GM12878 (cell line): ENCODE measurements at regions of chr10 and their contacts with region 1.

Region 1: DNA sequence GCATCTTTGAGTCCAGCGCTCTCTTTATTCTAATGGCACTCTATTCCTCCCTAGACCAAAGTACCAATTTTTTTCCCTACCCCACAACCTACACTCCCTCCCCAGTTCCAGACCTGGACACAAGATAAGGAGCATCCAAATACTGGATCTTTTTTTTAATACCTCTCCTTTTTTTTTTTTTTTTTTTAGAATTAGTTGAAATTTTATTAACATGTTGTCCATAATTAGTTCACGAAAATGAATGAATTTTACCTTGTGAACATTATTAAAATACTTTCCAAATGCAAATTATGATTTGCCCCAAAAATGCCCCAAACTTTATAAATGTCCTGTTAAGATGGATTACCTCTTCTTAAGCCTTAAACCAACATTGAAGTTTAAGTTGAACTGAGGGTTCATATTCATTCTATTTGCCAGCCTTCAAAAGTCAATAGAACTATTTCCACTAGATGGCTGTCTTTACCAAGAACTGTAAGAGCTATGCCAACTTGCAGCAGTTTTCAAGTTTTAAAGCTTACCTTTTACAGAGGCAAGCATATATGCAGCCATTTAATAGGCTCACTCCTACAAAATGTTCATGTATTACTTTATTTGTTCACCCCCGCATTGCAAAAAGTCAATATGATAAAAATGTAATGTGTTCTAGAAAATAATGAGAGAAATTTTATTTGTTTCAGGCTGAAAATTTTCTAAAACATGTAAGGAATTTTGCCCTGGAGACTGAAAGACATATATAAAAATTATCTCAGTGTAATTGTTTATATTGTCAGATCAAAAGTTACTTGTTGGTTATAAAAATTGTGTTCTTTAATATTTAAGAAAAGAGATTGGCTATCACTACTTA is 39.7 kb upstream of the TNKS2 start:
- DNase-seq: peak; percentile 11
- ATAC-seq: peak; percentile 74
- H3K4me3 ChIP-seq: no peak overlapping the region
- H3K27ac ChIP-seq: no peak overlapping the region
- H3K4me1 ChIP-seq: no peaks in the 10 kb centered on the region
- H3K27me3 ChIP-seq: no peaks in the 10 kb centered on the region
- CTCF ChIP-seq: peak; percentile 36 to 63 (median 42); a peak in 5 of 6 replicates
- EP300 ChIP-seq: no peak
- POLR2A ChIP-seq: no peak
- RAD21 ChIP-seq: peak; percentile 90

Region 2: GRCh38 chr10:91771907-91772306 is 13.4 kb after region 1 on chr10:
- CTCF ChIA-PET with region 1: interaction called, 11 read pairs
- POLR2A ChIA-PET with region 1: no interaction called
- RAD21 ChIA-PET with region 1: interaction called, 7 read pairs
- SMC1A ChIA-PET with region 1: interaction called, 5 read pairs
- in situ Hi-C with region 1: no loop called
- intact Hi-C with region 1: no loop called
- DNase-seq: no peak
- ATAC-seq: no peak
- H3K4me3 ChIP-seq: no peak overlapping the region
- H3K27ac ChIP-seq: no peak overlapping the region
- H3K4me1 ChIP-seq: no peaks in the 10 kb centered on the region
- H3K27me3 ChIP-seq: no peaks in the 10 kb centered on the region; a peak in 1 of 4 replicates
- CTCF ChIP-seq: no peak
- EP300 ChIP-seq: no peak
- POLR2A ChIP-seq: no peak
- RAD21 ChIP-seq: no peak